Gastrocnemius medialis (tissue), 4 donors: ENCODE measurements at regions of chr17 and their contacts with region 1.

Region 1: GRCh38 chr17:4412933-4413831 is 20.6 kb upstream of the SPNS3 start:
- DNase-seq: peak; percentile 73 to 83
- ATAC-seq: peak; percentile 88 to 93
- H3K4me3 ChIP-seq: no peak overlapping the region
- H3K27ac ChIP-seq: peak overlapping the region in 2 of 4 donors; percentile 8 to 12
- H3K4me1 ChIP-seq: no peaks in the 10 kb centered on the region
- H3K27me3 ChIP-seq: no peaks in the 10 kb centered on the region
- CTCF ChIP-seq: peak; percentile 84 to 96 (median 94)
- POLR2A ChIP-seq: no peak

Region 2: GRCh38 chr17:4199818-4200402 is 213.3 kb before region 1 on chr17:
- in situ Hi-C with region 1: loop called (anchors 5 to 10 kb)
- intact Hi-C with region 1: loop called (anchors 1 kb)
- DNase-seq: no peak
- ATAC-seq: no peak
- H3K4me3 ChIP-seq: no peak overlapping the region
- H3K27ac ChIP-seq: no peak overlapping the region
- H3K4me1 ChIP-seq: peaks cover 16 to 19% of the 10 kb centered on the region in 2 donors
- H3K27me3 ChIP-seq: no peaks in the 10 kb centered on the region
- CTCF ChIP-seq: peak; percentile 39 to 79 (median 69)
- POLR2A ChIP-seq: no peak

Region 3: DNA sequence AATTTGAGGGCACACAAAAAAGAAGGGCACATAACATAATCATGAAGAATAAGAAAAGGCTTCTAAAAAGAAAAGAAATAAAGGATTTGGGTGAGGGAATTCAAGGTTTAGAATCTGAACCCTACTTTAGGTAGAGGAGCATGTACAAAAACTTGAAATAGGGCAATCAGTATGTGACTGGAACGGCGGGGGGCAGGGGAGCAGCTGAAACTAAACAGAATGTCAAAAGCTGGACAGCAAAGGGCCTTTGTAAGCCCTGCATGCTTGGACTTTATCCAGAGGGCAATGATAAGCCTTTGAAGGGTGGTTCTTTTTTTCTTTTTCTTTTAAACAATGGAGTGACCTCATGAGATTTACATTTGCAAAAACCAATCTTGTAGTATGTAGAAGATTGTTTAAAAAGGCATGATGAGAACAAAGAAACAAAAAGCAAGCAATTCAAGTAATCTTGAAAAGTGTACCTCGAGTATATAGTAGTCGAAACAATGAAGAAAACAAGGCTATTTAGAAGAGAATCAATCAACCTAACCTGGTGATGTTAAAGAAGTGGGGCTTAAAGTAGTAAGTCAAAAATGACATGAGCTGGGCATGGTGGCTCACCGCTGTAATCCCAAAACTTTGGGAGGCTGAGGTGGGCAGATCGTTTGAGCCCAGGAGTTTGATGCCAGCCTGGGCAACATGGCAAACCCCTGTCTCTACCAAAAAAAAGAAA is 102.7 kb before region 1 on chr17:
- in situ Hi-C with region 1: no loop called
- intact Hi-C with region 1: loop called (anchors 5 kb)
- DNase-seq: no peak
- ATAC-seq: no peak
- H3K4me3 ChIP-seq: peak overlapping the region in 1 of 4 donors; percentile 15
- H3K27ac ChIP-seq: peak overlapping the region; percentile 38 to 77 (median 62)
- H3K4me1 ChIP-seq: peaks cover 63% of the 10 kb centered on the region in 2 donors
- H3K27me3 ChIP-seq: no peaks in the 10 kb centered on the region
- CTCF ChIP-seq: no peak
- POLR2A ChIP-seq: no peak

Region 4: DNA sequence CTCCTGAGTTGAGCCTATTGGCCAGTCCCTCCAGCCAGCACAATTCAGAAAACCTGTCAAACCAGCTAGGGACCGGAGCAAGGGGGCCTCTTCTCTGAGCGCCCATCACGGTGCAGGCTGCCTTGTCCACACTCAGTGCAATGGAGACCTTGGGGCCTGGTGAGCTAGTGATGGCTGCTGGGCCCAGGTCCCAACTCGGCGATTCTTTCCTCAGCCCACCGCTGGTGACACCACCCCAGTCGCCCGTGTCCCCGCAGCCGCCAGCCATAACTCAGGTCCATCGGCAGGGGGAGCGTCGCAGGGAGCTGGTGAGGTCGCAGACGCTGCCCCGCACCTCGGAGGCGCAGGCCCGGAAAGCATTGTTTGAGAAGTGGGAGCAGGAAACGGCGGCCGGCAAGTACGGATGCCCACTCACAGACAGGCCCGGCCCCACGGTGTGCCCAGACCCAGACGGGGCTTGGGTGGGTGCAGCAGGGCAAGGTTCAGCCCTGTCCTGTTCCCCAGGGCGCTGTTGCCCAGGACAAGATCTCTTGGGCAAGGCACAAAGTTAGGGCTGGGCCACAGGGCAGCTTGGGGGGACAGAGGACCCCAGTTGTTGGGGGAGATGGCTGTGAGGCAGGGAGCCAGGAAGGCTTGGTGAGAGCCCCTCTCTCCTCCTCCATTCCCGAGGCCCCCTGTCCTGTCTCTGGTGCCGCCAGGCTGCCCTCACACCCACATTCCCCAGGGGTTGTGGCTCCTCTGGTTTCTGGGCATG is 181.9 kb after region 1 on chr17:
- in situ Hi-C with region 1: no loop called
- intact Hi-C with region 1: no loop called
- DNase-seq: no peak
- ATAC-seq: no peak
- H3K4me3 ChIP-seq: no peak overlapping the region
- H3K27ac ChIP-seq: peak overlapping the region; percentile 90 to 100 (median 98)
- H3K4me1 ChIP-seq: peaks cover 78 to 84% of the 10 kb centered on the region in 2 donors
- H3K27me3 ChIP-seq: no peaks in the 10 kb centered on the region
- CTCF ChIP-seq: peak in 4 of 5 experiments; percentile 34 to 56 (median 44)
- POLR2A ChIP-seq: no peak